ENCODE measurements at regions of chr2 and their contacts with region 1.

Region 1: GRCh38 chr2:192194866-192195547 is at the start of gene TMEFF2:
- DNase-seq: peak; percentile 61
- H3K4me3 ChIP-seq: peak within 1 kb of the TSS; percentile 38 to 75 (median 43)
- H3K27ac ChIP-seq: no peak within 1 kb of the TSS
- H3K4me1 ChIP-seq: peaks cover 27% of the 10 kb centered on the region
- H3K27me3 ChIP-seq: peaks cover 48 to 89% of the 10 kb centered on the region in 2 experiments
- CTCF ChIP-seq: peak; percentile 24 to 32
- POLR2A ChIP-seq: no peak
- total RNA-seq, gene TMEFF2: 0.12 and 0.20 TPM in 2 replicates

Region 2: DNA sequence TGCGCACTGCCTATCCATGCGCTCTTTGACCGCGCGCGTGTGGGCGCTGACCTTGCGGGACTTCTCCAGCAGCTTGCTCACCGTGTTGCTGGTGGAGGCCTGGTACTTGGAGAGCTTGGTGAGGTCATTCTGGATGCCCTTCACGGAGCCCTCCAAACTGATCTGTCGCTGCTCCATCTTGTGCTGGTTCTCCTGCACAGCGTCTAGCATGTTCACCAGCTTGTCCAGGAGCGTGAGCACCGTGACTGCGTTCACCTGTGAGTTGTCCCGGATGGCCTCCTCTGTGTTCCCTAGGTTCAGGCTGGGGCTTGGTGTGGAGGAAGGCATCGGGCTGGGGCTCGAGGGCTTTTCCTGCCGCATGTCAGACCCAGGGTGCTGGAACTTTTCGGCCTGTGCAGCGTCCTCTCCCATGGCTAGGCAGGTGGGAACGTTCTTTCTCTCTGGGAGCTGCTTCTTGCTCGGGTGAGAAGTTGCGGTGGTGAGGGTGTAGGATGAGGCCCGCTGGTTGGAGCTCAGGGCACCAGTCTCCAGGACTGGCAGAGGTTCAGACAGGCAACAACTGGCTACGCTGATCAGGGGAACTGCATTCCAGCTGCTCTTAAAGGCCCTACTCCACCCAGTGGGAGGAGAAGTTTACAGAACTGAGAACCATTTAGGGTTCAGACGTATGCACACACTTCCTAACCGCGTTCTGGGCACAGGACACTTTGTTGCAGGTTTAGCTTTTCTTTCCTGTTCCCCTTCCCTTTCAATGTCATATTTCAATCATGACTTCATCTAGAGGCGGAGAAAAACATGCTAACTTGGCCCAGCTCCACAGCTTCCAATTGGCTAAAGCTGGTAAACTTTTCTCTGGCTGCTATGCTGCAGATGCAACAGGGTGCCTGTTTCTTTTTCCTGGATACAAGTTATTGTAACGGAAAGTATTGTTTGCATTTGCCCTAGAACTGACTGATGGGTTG is 348.2 kb before region 1 on chr2 and contains the start of gene CAVIN2:
- CTCF ChIA-PET with region 1: interaction called, 4 read pairs
- POLR2A ChIA-PET with region 1: no interaction called
- dilution Hi-C with region 1: no loop called
- intact Hi-C with region 1: loop called (anchors 1 kb)
- DNase-seq: peak; percentile 100
- H3K4me3 ChIP-seq: peak within 1 kb of the TSS; percentile 82 to 99 (median 95)
- H3K27ac ChIP-seq: peak within 1 kb of the TSS; percentile 76
- H3K4me1 ChIP-seq: peaks cover 21% of the 10 kb centered on the region
- H3K27me3 ChIP-seq: no peaks in the 10 kb centered on the region
- CTCF ChIP-seq: peak in 1 of 2 donors; percentile 17
- POLR2A ChIP-seq: peak; percentile 98
- total RNA-seq, gene CAVIN2: 171 and 202 TPM in 2 replicates

Region 3: DNA sequence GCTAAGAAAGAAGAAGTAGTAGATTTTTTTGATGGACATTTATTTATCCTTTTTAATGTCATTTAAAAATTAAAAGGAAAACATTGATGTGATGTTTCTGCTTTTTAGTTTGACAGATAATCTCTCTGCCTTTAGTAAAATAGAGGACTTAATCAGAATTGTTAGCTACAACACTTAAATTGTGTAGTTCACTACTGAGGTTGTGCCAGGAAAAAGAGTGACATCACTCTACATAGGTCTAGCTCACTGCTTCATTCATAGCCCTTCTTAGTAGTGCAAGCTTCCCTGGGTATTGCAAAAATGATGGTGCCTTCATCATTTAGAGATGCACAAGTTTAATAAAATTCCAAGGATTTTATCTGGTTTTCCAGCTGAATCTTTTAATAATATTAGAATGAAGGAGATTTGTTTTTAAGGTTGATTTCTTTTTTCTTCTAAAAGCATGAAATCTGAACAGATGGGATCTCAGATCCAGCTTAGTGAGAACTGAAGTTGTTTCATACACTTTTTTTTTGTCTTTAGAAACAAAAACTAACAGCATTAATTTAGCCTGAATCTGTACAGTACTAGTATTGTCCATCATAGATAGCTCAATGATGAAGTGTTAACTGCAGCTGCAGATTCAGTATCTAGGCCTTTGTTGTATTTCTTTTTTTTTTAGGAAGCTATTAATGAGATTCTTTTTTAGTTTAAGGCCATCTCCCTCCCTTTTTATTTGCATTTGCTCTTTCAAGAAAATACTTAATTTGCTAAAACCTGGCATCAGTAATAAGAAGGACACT is 20.3 kb after region 1 on chr2:
- CTCF ChIA-PET with region 1: no interaction called
- POLR2A ChIA-PET with region 1: no interaction called
- dilution Hi-C with region 1: no loop called
- intact Hi-C with region 1: no loop called
- DNase-seq: no peak
- H3K4me3 ChIP-seq: no peak overlapping the region
- H3K27ac ChIP-seq: no peak overlapping the region
- H3K4me1 ChIP-seq: no peaks in the 10 kb centered on the region
- H3K27me3 ChIP-seq: peaks cover 0 to 2% of the 10 kb centered on the region in 2 experiments
- CTCF ChIP-seq: no peak
- POLR2A ChIP-seq: no peak

Region 4: GRCh38 chr2:192230889-192231453 is 36.0 kb after region 1 on chr2:
- CTCF ChIA-PET with region 1: no interaction called
- POLR2A ChIA-PET with region 1: no interaction called
- dilution Hi-C with region 1: no loop called
- intact Hi-C with region 1: loop called (anchors 2 kb)
- DNase-seq: no peak
- H3K4me3 ChIP-seq: no peak overlapping the region
- H3K27ac ChIP-seq: no peak overlapping the region
- H3K4me1 ChIP-seq: no peaks in the 10 kb centered on the region
- H3K27me3 ChIP-seq: peaks cover 0 to 5% of the 10 kb centered on the region in 2 experiments
- CTCF ChIP-seq: no peak
- POLR2A ChIP-seq: no peak

Region 5: DNA sequence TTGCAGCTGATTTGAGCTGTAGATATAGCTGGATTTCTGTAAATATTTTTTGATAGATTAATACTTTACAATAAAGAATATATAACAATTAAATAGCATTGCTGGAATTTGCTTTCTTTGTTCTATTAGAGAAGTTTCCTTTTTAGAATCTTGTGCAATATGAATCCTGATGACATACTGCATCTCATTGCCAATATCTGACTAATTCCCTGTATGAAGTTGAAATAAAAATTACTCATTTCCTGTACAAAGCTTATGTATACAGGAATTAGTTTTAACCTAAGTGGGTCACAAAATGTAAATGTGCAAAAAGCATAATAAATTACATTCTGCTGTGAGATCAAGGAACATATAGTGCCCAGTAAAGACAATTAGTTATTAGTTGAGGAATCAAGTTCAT is 72.5 kb after region 1 on chr2:
- CTCF ChIA-PET with region 1: interaction called, 3 read pairs
- POLR2A ChIA-PET with region 1: no interaction called
- dilution Hi-C with region 1: no loop called
- intact Hi-C with region 1: loop called (anchors 2 kb)
- DNase-seq: peak; percentile 85
- H3K4me3 ChIP-seq: no peak overlapping the region
- H3K27ac ChIP-seq: peak overlapping the region; percentile 90
- H3K4me1 ChIP-seq: peaks cover 15% of the 10 kb centered on the region
- H3K27me3 ChIP-seq: no peaks in the 10 kb centered on the region
- CTCF ChIP-seq: no peak
- POLR2A ChIP-seq: no peak

Region 6: GRCh38 chr2:192286093-192286701 is 91.2 kb after region 1 on chr2:
- CTCF ChIA-PET with region 1: interaction called, 7 read pairs
- POLR2A ChIA-PET with region 1: no interaction called
- dilution Hi-C with region 1: no loop called
- intact Hi-C with region 1: loop called (anchors 1 kb)
- DNase-seq: peak; percentile 73
- H3K4me3 ChIP-seq: no peak overlapping the region
- H3K27ac ChIP-seq: no peak overlapping the region
- H3K4me1 ChIP-seq: no peaks in the 10 kb centered on the region
- H3K27me3 ChIP-seq: peaks cover 1 to 4% of the 10 kb centered on the region in 2 experiments
- CTCF ChIP-seq: peak; percentile 45 to 55
- POLR2A ChIP-seq: no peak

Region 7: DNA sequence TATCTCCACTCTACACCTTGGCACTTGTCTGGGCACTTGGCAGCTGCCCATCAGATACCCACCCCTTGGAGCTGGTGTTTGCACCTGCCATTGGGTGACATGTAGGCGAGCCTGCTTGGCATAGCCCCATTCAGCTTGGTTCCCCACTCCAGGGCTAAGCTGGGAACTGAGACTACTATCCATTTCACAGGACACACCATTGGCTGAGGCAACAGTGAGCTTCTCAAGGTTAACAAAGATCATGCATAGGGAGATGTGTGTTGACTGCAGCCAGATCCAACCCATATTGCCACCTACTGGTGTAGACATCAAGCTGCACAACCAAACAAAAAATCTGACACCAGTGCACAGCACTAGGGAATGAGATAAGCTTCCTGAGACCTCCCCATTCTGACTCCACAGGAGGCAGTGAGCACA is 1389.5 kb after region 1 on chr2:
- CTCF ChIA-PET with region 1: interaction called, 7 read pairs
- POLR2A ChIA-PET with region 1: no interaction called
- dilution Hi-C with region 1: no loop called
- intact Hi-C with region 1: loop called (anchors 2 kb)
- DNase-seq: peak; percentile 16
- H3K4me3 ChIP-seq: no peak overlapping the region
- H3K27ac ChIP-seq: no peak overlapping the region
- H3K4me1 ChIP-seq: no peaks in the 10 kb centered on the region
- H3K27me3 ChIP-seq: no peaks in the 10 kb centered on the region
- CTCF ChIP-seq: peak; percentile 18 to 24
- POLR2A ChIP-seq: no peak

Measured in endothelial cell of umbilical vein (primary cell).